A673 (cell line): ENCODE measurements at regions of chr10 and their contacts with region 1.

Region 1: DNA sequence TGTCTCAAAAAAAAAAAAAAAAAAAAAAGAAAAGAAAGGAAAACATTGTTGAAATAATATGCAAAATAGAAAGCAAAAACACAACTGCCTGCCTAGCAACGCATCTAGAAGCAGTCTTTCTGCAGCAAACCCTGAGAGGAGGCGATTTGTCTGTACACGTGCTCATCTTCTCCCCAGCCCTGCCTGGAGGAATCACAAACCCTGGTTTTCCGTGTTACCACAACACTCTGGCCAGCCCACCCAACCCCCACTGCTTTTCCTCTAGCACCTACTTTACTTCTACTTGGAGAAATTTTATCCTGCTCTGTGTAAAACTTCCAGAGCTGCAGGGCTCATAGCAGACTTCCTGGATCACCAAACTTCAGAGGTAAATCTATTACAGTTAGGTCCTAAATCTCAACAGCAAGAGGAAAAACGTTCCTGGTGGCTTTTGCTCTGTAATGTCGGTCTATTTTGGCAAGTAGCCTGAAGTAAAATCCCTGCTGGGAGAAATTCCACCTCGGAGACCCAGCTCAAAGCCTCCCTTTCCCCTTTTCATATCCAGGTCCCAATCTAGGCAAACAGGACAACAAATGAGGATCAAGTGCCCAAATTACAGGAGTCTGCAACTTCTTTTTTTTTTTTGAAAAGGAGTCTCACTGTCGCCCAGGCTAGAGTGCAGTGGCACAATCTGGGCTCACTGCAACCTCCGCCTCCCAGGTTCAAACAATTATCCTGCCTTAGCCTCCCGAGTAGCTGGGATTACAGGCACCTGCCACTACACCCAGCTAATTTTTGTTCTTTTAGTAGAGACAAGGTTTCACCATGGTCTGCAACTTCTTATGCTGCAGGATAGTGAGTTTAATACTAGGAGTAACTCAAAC is 91.6 kb downstream of the DNMBP start:
- DNase-seq: peak; percentile 91
- H3K4me3 ChIP-seq: peak overlapping the region; percentile 43
- H3K27ac ChIP-seq: peak overlapping the region; percentile 87
- H3K4me1 ChIP-seq: peaks cover 28% of the 10 kb centered on the region
- H3K27me3 ChIP-seq: no peaks in the 10 kb centered on the region
- CTCF ChIP-seq: no peak

Region 2: DNA sequence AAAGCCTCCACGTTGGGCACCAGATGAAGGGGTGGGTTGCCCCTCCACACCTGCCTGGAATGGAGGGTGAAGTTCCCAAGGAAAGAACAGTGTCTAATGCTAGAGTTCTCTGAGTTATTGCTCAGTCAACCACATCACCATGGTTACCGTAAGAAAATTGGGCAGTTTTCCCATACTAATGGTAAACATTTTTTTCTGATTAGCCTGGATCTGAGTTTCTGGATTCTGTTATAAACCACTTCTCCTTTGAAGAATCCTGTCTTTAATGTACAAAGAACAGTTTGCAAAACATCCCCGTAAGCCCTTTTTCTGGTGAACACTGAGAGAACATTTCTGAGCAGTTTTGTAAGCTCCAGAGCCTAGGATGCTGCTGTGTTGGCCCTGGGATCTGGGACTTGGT is 90.3 kb before region 1 on chr10:
- CTCF ChIA-PET with region 1: no interaction called
- POLR2A ChIA-PET with region 1: no interaction called
- intact Hi-C with region 1: no loop called
- DNase-seq: no peak
- H3K4me3 ChIP-seq: no peak overlapping the region
- H3K27ac ChIP-seq: no peak overlapping the region
- H3K4me1 ChIP-seq: no peaks in the 10 kb centered on the region
- H3K27me3 ChIP-seq: no peaks in the 10 kb centered on the region
- CTCF ChIP-seq: no peak

Region 3: GRCh38 chr10:99966306-99966705 is 48.1 kb after region 1 on chr10:
- CTCF ChIA-PET with region 1: no interaction called
- POLR2A ChIA-PET with region 1: no interaction called
- intact Hi-C with region 1: no loop called
- DNase-seq: no peak
- H3K4me3 ChIP-seq: no peak overlapping the region
- H3K27ac ChIP-seq: no peak overlapping the region
- H3K4me1 ChIP-seq: peaks cover 10% of the 10 kb centered on the region
- H3K27me3 ChIP-seq: no peaks in the 10 kb centered on the region
- CTCF ChIP-seq: no peak

Region 4: GRCh38 chr10:99996671-99997625 is 78.8 kb after region 1 on chr10:
- CTCF ChIA-PET with region 1: interaction called, 14 read pairs
- POLR2A ChIA-PET with region 1: no interaction called
- intact Hi-C with region 1: no loop called
- DNase-seq: peak; percentile 93
- H3K4me3 ChIP-seq: peak overlapping the region; percentile 24
- H3K27ac ChIP-seq: peak overlapping the region; percentile 64
- H3K4me1 ChIP-seq: peaks cover 54% of the 10 kb centered on the region
- H3K27me3 ChIP-seq: no peaks in the 10 kb centered on the region
- CTCF ChIP-seq: no peak

Region 5: DNA sequence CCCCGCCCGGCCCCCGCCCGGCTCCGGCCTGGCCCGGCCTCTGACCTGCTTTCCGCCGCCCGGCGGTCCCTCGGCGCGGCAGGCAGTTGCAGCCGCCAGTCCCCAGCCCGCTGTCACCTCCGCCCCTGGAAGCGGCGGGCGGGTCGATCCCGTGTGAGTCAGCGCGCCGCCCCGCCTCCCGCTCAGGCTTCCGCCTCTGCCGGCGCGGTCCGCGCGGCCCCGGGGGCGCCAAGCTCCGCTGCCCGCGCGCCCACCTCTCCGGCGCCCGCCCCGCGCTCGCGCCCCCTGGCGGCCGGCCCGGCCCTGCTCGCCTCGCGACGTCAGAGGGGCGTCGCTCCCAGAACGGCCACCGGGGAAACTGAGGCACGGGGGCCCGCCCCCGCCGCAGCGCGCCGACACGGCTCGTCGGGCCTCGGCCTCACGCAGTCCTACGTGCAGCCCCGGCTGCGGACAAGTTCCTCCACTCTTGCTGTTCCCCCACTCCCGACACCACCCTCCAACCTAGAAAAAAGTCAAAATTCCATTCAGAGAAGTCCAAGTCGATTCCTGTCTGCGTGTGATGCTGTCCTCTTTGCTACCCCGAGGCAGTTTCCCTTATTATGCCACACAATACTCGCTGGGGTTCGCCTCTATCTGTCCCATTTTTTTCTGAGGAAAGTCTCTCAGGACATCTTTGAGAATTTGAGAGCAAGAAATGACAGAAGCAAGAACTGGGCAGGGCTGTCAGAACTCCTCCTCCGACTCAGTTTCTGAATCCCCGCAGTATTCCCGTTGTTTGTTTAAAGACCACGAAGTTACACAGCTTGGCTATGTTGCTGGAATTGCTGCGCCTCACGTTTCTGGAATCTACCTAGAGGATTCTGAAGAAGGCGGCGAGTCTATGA is 91.8 kb after region 1 on chr10 and contains the start of gene DNMBP:
- CTCF ChIA-PET with region 1: interaction called, 9 read pairs
- POLR2A ChIA-PET with region 1: interaction called, 3 read pairs
- intact Hi-C with region 1: loop called (anchors 2 kb)
- DNase-seq: peak; percentile 92
- H3K4me3 ChIP-seq: peak within 1 kb of the TSS; percentile 61
- H3K27ac ChIP-seq: peak within 1 kb of the TSS; percentile 53
- H3K4me1 ChIP-seq: peaks cover 29% of the 10 kb centered on the region
- H3K27me3 ChIP-seq: no peaks in the 10 kb centered on the region
- CTCF ChIP-seq: peak; percentile 54
- total RNA-seq, gene DNMBP: 23.6 and 28.0 TPM in 2 replicates

Region 6: DNA sequence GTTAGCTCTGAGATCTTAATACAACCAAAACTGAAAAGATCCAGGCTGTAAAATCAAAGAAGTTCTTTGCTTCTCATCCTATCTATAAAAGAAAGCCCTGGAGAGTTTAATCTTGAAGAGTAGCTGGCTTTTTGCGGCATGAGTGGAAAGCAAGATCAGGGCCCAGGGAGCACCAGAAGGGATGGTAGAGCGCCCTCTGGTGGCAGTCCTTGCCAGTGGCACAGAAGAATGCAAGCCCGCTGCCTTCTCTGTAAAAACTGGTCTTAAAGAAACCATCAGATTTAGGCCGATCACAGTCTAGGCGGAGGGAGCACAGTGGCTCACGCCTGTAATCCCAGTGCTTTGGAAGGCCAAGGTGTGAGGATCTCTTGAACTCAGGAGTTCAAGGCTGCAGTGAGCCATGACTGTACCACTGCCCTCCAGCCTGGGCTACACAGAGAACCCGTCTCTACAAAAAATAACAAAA is 127.9 kb after region 1 on chr10:
- CTCF ChIA-PET with region 1: interaction called, 6 read pairs
- POLR2A ChIA-PET with region 1: no interaction called
- intact Hi-C with region 1: loop called (anchors 1 kb)
- DNase-seq: peak; percentile 92
- H3K4me3 ChIP-seq: no peak overlapping the region
- H3K27ac ChIP-seq: no peak overlapping the region
- H3K4me1 ChIP-seq: peaks cover 27% of the 10 kb centered on the region
- H3K27me3 ChIP-seq: no peaks in the 10 kb centered on the region
- CTCF ChIP-seq: peak; percentile 94

Region 7: DNA sequence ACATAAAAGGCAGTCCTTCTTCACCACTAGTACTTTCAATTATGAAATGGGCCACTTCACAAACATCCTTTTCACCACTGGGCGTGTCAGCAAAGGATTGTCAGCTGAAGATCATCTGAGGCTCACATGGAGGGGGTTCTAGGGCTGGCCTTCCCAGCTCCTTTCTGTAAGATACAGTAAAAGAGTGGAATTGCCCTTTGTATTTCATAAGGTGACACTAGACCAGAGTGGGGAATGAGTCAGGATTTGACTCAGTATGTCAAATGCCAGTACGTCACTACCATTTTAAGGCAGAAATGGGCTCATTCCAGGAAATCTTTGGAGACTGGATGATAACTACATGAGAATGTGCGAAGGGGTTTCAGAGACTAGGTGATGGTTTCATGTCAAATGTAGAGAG is 389.5 kb after region 1 on chr10:
- CTCF ChIA-PET with region 1: no interaction called
- POLR2A ChIA-PET with region 1: no interaction called
- intact Hi-C with region 1: no loop called
- DNase-seq: no peak
- H3K4me3 ChIP-seq: no peak overlapping the region
- H3K27ac ChIP-seq: no peak overlapping the region
- H3K4me1 ChIP-seq: no peaks in the 10 kb centered on the region
- H3K27me3 ChIP-seq: no peaks in the 10 kb centered on the region
- CTCF ChIP-seq: no peak

Region 8: GRCh38 chr10:100725071-100725471 is 806.9 kb after region 1 on chr10:
- CTCF ChIA-PET with region 1: no interaction called
- POLR2A ChIA-PET with region 1: no interaction called
- intact Hi-C with region 1: no loop called
- DNase-seq: no peak
- H3K4me3 ChIP-seq: no peak overlapping the region
- H3K27ac ChIP-seq: no peak overlapping the region
- H3K4me1 ChIP-seq: peaks cover 10% of the 10 kb centered on the region
- H3K27me3 ChIP-seq: peaks cover 95% of the 10 kb centered on the region
- CTCF ChIP-seq: no peak